ENCODE measurements at regions of chr1 and their contacts with region 1.

Region 1: DNA sequence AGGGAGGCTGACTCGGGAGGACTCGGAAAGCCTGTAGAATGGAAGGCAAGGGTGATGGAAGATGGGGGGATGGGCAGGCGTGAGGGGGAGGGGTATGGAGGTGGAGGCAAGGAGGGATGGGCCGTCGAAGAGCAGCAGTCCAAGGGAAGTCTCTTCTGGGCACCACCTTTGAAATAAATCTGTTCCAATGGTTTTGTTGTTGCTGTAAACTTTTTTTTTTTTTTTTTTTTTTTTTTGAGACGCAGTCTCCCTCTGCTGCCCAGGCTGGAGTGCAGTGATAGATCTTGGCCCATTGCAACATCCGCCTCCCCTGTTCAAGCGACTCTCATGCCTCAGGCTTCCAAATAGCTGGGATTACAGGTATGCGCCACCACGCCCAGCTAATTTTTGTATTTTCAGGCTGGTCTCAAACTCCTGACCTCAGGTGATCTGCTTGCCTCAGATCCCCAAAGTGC is 79.0 kb upstream of the SLC45A1 start:
- DNase-seq: no peak
- ATAC-seq: peak; percentile 88

Region 2: GRCh38 chr1:8077120-8077573 is 161.7 kb before region 1 on chr1:
- intact Hi-C with region 1: no loop called
- DNase-seq: peak; percentile 72
- ATAC-seq: peak; percentile 94

Region 3: GRCh38 chr1:8302081-8302956 is 63.4 kb after region 1 on chr1:
- intact Hi-C with region 1: loop called (anchors 10 kb)
- DNase-seq: no peak
- ATAC-seq: no peak

Measured in Right ventricle myocardium inferior (tissue), 1 donor.